ENCODE measurements at regions of chr12 and their contacts with region 1.

Region 1: DNA sequence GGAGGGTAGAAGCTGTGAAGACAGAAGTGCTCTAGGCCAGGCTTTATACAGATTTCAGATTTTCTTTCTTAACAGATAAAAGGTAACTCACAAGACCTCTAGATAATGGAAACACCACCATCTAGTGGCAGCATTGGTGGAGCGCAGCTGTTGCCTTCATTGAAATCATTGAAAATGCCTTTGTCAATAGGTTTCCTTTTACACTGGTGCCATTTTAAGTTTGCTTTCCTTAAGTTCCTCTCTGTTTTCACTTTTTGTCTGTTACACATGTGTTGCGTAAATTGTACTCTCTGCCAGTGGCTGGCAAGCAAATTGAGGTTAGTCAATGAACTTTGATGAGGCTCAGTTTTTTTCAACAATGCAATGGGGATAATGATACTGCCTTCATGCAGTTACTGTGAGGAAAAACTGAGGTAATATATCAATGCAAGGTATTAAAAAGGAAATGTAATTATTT is 31.1 kb downstream of the ALDH1L2 start:
- DNase-seq: peak; percentile 79
- ATAC-seq: peak; percentile 96
- H3K4me3 ChIP-seq: no peak overlapping the region
- H3K27ac ChIP-seq: no peak overlapping the region
- H3K4me1 ChIP-seq: peaks cover 8% of the 10 kb centered on the region
- H3K27me3 ChIP-seq: no peaks in the 10 kb centered on the region
- CTCF ChIP-seq: peak; percentile 78 to 96 (median 94)
- EP300 ChIP-seq: no peak
- POLR2A ChIP-seq: no peak
- RAD21 ChIP-seq: peak; percentile 99

Region 2: GRCh38 chr12:104456417-104456949 is 596.7 kb before region 1 on chr12 and contains the start of gene CHST11:
- CTCF ChIA-PET with region 1: interaction called, 6 read pairs
- POLR2A ChIA-PET with region 1: no interaction called
- RAD21 ChIA-PET with region 1: interaction called, 9 read pairs
- SMC1A ChIA-PET with region 1: no interaction called
- in situ Hi-C with region 1: no loop called
- intact Hi-C with region 1: loop called (anchors 5 kb)
- DNase-seq: no peak
- ATAC-seq: peak; percentile 76
- H3K4me3 ChIP-seq: peak within 1 kb of the TSS; percentile 100
- H3K27ac ChIP-seq: peak within 1 kb of the TSS; percentile 95
- H3K4me1 ChIP-seq: peaks cover 7% of the 10 kb centered on the region; the same call in 1 of the 2 replicates
- H3K27me3 ChIP-seq: no peaks in the 10 kb centered on the region
- CTCF ChIP-seq: peak; percentile 11 to 21 (median 15); a peak in 2 of 6 replicates
- EP300 ChIP-seq: peak; percentile 38 to 57; a peak in 1 of 4 replicates
- POLR2A ChIP-seq: no peak
- RAD21 ChIP-seq: peak; percentile 20; the same call in 1 of the 2 replicates
- polyA plus RNA-seq, gene CHST11: 1.9 to 2.5 TPM

Region 3: DNA sequence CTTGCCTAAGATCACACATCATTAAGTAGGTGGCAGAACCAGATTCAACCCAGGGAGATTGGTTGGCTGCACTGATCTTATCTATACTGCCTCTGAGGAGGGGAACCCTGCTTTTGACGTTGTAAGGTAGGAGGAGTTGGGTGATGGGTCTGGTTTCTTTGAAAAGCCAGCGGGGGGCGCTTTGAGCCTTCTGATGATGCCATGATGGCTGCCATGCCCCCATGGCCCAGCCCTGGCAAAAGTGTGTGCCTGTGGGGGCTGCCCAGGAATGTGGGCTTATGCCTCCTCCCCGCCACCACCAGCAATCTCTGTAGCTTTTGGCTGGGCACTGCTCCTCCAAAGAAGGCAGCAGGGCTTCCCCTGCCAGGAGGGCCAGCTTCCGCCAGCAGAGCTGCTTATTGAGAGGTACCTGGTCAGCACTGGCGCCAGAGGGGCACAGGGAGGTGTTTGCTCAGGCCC is 319.4 kb before region 1 on chr12:
- CTCF ChIA-PET with region 1: interaction called, 3 read pairs
- POLR2A ChIA-PET with region 1: no interaction called
- RAD21 ChIA-PET with region 1: interaction called, 3 read pairs
- SMC1A ChIA-PET with region 1: interaction called, 17 read pairs
- in situ Hi-C with region 1: no loop called
- intact Hi-C with region 1: no loop called
- DNase-seq: no peak
- ATAC-seq: peak; percentile 75
- H3K4me3 ChIP-seq: no peak overlapping the region
- H3K27ac ChIP-seq: no peak overlapping the region
- H3K4me1 ChIP-seq: peaks cover 18% of the 10 kb centered on the region
- H3K27me3 ChIP-seq: no peaks in the 10 kb centered on the region
- CTCF ChIP-seq: peak in 2 of 3 experiments; percentile 26 to 39; a peak in 3 of 6 replicates
- EP300 ChIP-seq: no peak
- POLR2A ChIP-seq: no peak
- RAD21 ChIP-seq: peak; percentile 55

Region 4: DNA sequence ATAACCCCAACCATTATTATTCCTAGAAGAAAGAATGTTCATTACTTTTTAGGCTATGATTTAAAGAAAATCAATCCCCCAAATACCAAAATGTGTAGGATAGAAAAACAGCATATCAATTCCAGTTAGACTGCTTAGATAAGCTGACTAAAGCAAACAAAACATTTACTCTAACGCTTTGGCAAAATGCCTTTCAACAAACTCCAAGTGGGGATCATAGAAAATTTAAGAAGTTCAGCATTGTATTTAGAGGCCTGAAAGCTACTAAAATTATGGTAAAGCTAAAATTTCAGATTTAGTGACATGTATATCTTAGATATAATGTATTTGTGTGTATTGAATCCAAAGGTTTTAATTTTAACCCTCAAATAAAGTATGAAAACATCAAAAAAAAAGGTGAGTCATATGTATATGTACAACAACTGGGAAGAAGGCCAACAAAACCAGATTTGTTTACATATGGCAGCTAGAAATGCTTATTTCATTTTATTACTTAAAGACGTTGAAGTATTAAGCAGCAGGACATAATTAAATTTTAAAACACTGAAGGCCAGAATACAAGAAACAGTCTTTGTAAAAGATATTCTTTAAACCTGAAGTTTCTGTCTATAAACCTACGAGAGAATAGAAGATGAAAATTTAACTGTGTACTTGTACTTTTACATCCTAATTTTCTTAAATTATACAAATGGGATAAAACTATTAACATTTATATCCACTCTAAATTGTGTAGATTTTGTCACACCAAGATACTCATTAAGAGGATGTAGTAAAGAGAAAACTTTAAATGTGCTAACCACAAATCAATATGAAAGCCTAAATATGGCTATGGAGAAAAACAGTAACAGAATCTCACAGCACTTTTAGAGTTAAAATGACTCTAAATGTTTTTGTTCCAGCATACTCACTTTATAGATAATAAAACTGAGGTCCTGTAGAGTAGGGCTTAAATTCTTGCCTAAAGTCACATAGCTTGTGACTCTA is 166.4 kb before region 1 on chr12:
- CTCF ChIA-PET with region 1: no interaction called
- POLR2A ChIA-PET with region 1: interaction called, 5 read pairs
- RAD21 ChIA-PET with region 1: interaction called, 3 read pairs
- SMC1A ChIA-PET with region 1: no interaction called
- in situ Hi-C with region 1: no loop called
- intact Hi-C with region 1: loop called (anchors 5 kb)
- DNase-seq: no peak
- ATAC-seq: no peak
- H3K4me3 ChIP-seq: no peak overlapping the region
- H3K27ac ChIP-seq: no peak overlapping the region
- H3K4me1 ChIP-seq: peaks cover 3% of the 10 kb centered on the region; the same call in 1 of the 2 replicates
- H3K27me3 ChIP-seq: no peaks in the 10 kb centered on the region
- CTCF ChIP-seq: no peak
- EP300 ChIP-seq: no peak
- POLR2A ChIP-seq: no peak
- RAD21 ChIP-seq: no peak

Region 5: GRCh38 chr12:105036937-105037649 is 16.1 kb before region 1 on chr12:
- CTCF ChIA-PET with region 1: interaction called, 5 read pairs
- POLR2A ChIA-PET with region 1: no interaction called
- RAD21 ChIA-PET with region 1: no interaction called
- SMC1A ChIA-PET with region 1: interaction called, 12 read pairs
- in situ Hi-C with region 1: no loop called
- intact Hi-C with region 1: no loop called
- DNase-seq: no peak
- ATAC-seq: peak; percentile 74
- H3K4me3 ChIP-seq: no peak overlapping the region
- H3K27ac ChIP-seq: 0 out of 2 replicates have a peak overlapping the region, but pooled peaks have one; percentile 48
- H3K4me1 ChIP-seq: peaks cover 21% of the 10 kb centered on the region
- H3K27me3 ChIP-seq: no peaks in the 10 kb centered on the region
- CTCF ChIP-seq: no peak
- EP300 ChIP-seq: no peak
- POLR2A ChIP-seq: no peak
- RAD21 ChIP-seq: no peak

Region 6: DNA sequence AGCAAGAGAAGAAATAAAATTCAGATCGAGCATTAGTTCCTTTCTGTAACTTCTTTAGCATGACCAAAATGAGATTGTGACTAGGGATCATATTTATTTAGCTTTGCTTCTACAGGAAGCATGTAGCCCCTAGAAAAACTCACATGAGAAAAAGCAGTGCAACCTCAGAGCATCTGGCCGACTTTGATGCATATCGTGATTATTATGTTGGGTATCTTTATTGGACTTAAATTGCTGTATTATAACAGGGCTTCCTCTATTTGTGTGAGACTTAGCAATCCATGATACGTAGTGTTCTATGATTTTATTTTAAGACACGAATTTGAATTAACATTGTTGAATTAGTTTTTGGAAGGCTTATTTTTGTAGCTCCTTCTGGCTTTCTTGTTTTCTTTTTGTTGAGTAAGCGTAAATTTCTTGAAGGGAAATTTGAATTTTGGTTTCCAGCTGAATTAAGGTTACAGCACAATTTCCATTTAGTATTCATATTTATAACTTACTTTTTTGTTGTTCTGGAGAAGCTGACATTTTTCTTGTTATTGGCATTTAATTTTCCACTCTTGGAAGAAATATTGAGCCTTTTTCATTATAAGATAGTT is 88.3 kb after region 1 on chr12:
- CTCF ChIA-PET with region 1: no interaction called
- POLR2A ChIA-PET with region 1: no interaction called
- RAD21 ChIA-PET with region 1: no interaction called
- SMC1A ChIA-PET with region 1: no interaction called
- in situ Hi-C with region 1: no loop called
- intact Hi-C with region 1: no loop called
- DNase-seq: no peak
- ATAC-seq: no peak
- H3K4me3 ChIP-seq: no peak overlapping the region
- H3K27ac ChIP-seq: no peak overlapping the region
- H3K4me1 ChIP-seq: no peaks in the 10 kb centered on the region
- H3K27me3 ChIP-seq: no peaks in the 10 kb centered on the region
- CTCF ChIP-seq: no peak
- EP300 ChIP-seq: no peak
- POLR2A ChIP-seq: no peak
- RAD21 ChIP-seq: no peak